ENCODE measurements at regions of chr10 and their contacts with region 1.

Region 1: DNA sequence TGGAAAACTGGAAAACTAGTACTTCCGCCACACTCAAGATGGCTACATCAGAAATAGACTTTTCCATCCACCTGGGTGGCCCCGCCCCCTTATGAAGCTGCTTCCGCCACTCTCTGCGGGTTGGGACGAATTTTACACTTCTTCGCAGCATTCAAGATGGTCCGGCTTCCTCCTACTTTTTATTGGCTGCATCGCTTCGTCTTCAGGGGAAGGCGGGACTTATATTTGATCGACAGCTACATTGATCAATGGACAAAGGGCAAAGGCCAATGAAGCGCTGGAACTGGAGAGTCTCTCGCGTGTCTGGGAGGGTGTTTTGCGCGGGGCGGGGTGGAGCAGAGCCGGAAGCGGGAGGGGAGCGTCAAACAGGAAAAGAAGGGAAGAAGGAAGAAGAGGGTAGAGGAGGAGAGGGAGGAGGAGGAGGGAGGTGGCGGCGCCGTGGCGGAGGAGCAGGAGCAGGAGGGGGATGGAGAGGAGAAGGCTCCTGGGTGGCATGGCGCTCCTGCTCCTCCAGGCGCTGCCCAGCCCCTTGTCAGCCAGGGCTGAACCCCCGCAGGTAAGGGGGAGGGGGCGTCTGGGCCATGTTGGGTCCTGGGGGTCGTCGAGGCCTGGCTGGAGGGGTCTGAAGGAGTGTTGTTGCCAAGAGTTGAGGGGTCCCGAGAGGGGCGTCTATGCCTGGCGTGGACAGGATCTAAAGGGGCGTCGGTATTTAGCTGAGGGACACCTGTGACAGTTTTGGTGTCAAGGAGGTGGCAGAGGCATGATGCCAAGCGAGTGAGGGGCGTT is at the start of gene WBP1L:
- DNase-seq: peak; percentile 96
- ATAC-seq: peak; percentile 98
- H3K4me3 Mint-ChIP-seq: peak within 1 kb of the TSS; percentile 92
- H3K27ac Mint-ChIP-seq: peak within 1 kb of the TSS; percentile 82
- H3K4me1 Mint-ChIP-seq: peaks cover 42% of the 10 kb centered on the region
- H3K27me3 Mint-ChIP-seq: no peaks in the 10 kb centered on the region
- total RNA-seq, gene WBP1L: 14.9 to 16.4 TPM

Region 2: GRCh38 chr10:102678842-102679289 is 64.9 kb before region 1 on chr10:
- CTCF ChIA-PET with region 1: no interaction called
- POLR2A ChIA-PET with region 1: no interaction called
- intact Hi-C with region 1: loop called in 1 of 2 experiments (anchors 2 kb)
- DNase-seq: peak; percentile 53
- ATAC-seq: no peak
- H3K4me3 Mint-ChIP-seq: no peak overlapping the region
- H3K27ac Mint-ChIP-seq: no peak overlapping the region
- H3K4me1 Mint-ChIP-seq: peaks cover 45% of the 10 kb centered on the region
- H3K27me3 Mint-ChIP-seq: no peaks in the 10 kb centered on the region

Region 3: GRCh38 chr10:102713814-102714620 is 29.8 kb before region 1 on chr10 and contains the start of gene ARL3:
- CTCF ChIA-PET with region 1: interaction called, 4 read pairs
- POLR2A ChIA-PET with region 1: interaction called, 6 read pairs
- intact Hi-C with region 1: loop called (anchors 1 kb)
- DNase-seq: peak; percentile 99
- ATAC-seq: peak; percentile 90
- H3K4me3 Mint-ChIP-seq: peak within 1 kb of the TSS; percentile 82
- H3K27ac Mint-ChIP-seq: peak within 1 kb of the TSS; percentile 81
- H3K4me1 Mint-ChIP-seq: peaks cover 59% of the 10 kb centered on the region
- H3K27me3 Mint-ChIP-seq: no peaks in the 10 kb centered on the region
- total RNA-seq, gene ARL3: 6.4 to 6.9 TPM

Region 4: DNA sequence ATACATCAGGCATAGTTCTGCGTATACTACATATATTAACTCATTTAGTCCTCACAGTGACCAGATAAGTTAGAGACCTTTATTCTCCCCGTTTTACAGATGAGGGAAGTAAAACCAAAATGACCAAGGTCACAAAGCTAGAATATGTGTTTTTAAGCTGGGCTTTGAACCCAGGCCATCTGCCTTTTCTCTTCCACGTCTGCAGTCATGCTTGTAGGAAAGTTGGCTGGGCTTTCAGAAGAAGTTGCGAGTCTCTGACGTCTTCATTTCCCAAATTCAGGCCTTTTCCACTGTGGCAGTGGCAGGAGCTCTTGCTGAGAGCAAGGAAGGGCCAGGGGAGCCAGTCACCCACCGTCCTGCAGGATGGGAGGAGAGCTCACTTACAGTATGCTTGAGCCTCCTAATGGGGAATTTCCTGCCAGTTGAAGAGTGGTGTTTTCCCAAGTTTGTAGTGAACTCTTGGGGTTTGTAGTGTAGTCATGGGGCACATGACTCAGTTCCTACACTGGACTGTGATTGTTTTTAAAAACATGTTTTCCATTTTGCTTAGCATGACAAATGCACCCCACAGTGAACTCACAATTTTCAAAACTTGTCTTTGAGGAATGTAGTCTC is 59.2 kb after region 1 on chr10:
- CTCF ChIA-PET with region 1: no interaction called
- POLR2A ChIA-PET with region 1: interaction called, 3 read pairs
- intact Hi-C with region 1: loop called in 1 of 2 experiments (anchors 2 kb)
- DNase-seq: peak; percentile 41
- ATAC-seq: peak; percentile 92
- H3K4me3 Mint-ChIP-seq: no peak overlapping the region
- H3K27ac Mint-ChIP-seq: peak overlapping the region; percentile 93
- H3K4me1 Mint-ChIP-seq: peaks cover 34% of the 10 kb centered on the region
- H3K27me3 Mint-ChIP-seq: no peaks in the 10 kb centered on the region

Region 5: GRCh38 chr10:103192451-103193106 is 448.8 kb after region 1 on chr10:
- CTCF ChIA-PET with region 1: no interaction called
- POLR2A ChIA-PET with region 1: no interaction called
- intact Hi-C with region 1: loop called in 1 of 2 experiments (anchors 1 kb)
- DNase-seq: peak; percentile 81
- ATAC-seq: peak; percentile 50
- H3K4me3 Mint-ChIP-seq: peak overlapping the region; percentile 95
- H3K27ac Mint-ChIP-seq: peak overlapping the region; percentile 99
- H3K4me1 Mint-ChIP-seq: peaks cover 44% of the 10 kb centered on the region
- H3K27me3 Mint-ChIP-seq: no peaks in the 10 kb centered on the region

Region 6: GRCh38 chr10:103367782-103368518 is 624.2 kb after region 1 on chr10 and contains the start of gene TAF5:
- CTCF ChIA-PET with region 1: no interaction called
- POLR2A ChIA-PET with region 1: no interaction called
- intact Hi-C with region 1: loop called in 1 of 2 experiments (anchors 1 kb)
- DNase-seq: peak; percentile 95
- ATAC-seq: peak; percentile 61
- H3K4me3 Mint-ChIP-seq: peak within 1 kb of the TSS; percentile 81
- H3K27ac Mint-ChIP-seq: peak within 1 kb of the TSS; percentile 85
- H3K4me1 Mint-ChIP-seq: peaks cover 16% of the 10 kb centered on the region
- H3K27me3 Mint-ChIP-seq: no peaks in the 10 kb centered on the region
- total RNA-seq, gene TAF5: 11.2 to 11.4 TPM

Measured in activated CD4-positive, alpha-beta T cell treated with anti-CD3 and anti-CD28 coated beads for 36 hours (primary cell).